ENCODE measurements at regions of chr10 and their contacts with region 1.

Region 1: DNA sequence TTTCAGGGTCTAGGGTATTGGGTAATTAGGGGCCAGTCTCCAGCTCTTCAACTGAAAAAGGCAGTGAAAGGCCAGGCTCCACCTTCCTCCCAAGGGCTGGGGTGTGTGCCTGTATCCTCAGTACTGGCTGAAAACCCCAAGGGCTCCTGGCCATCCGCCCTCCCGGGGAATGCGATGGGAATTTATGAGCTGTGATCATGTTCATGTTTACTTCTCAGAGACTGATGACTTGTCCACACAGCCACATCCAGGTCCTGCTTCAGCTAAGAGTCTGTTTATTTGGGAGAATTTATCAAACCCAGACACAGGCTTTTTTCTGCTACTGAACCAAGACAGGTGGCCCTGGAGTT is 91.7 kb downstream of the CCDC3 start:
- ATAC-seq: peak in 4 of 8 experiments; percentile 49 to 97 (median 70)
- H3K4me3 ChIP-seq: no peak overlapping the region
- H3K27ac ChIP-seq: no peak overlapping the region
- H3K4me1 ChIP-seq: no peaks in the 10 kb centered on the region

Region 2: GRCh38 chr10:12540341-12540781 is 369.4 kb before region 1 on chr10:
- in situ Hi-C with region 1: no loop called
- ATAC-seq: no peak
- H3K4me3 ChIP-seq: no peak overlapping the region
- H3K27ac ChIP-seq: no peak overlapping the region
- H3K4me1 ChIP-seq: peaks cover 10 to 20% of the 10 kb centered on the region in 2 donors

Region 3: DNA sequence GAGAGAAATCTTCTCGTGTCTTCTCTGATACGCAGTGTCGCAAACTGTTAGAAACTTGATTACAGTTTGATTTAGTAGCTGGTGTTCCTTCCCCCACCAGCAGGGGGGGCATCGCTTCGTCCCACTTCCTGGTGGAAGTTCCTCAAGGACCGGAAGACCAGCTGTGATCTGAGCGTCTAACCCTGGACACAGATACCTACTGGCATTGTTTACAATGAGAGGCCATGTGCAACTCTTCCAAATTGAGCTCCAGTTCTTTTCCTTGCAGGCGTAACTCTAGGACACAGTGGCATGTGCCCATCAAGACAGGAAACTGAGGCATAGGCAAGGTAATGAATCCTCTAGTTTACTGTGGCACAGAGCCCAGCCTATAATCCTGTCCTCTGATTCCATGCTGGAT is 127.3 kb before region 1 on chr10:
- in situ Hi-C with region 1: no loop called
- ATAC-seq: peak in 2 of 8 experiments; percentile 21 to 41
- H3K4me3 ChIP-seq: no peak overlapping the region
- H3K27ac ChIP-seq: no peak overlapping the region
- H3K4me1 ChIP-seq: peaks cover 8 to 15% of the 10 kb centered on the region in 2 donors

Region 4: GRCh38 chr10:13062803-13063202 is 153.0 kb after region 1 on chr10:
- in situ Hi-C with region 1: loop called in 1 of 9 experiments (anchors 10 kb)
- ATAC-seq: peak in 2 of 8 experiments; percentile 67 to 75
- H3K4me3 ChIP-seq: no peak overlapping the region
- H3K27ac ChIP-seq: no peak overlapping the region
- H3K4me1 ChIP-seq: no peaks in the 10 kb centered on the region